PC-3 (cell line): ENCODE measurements at regions of chr22 and their contacts with region 1.

Region 1: DNA sequence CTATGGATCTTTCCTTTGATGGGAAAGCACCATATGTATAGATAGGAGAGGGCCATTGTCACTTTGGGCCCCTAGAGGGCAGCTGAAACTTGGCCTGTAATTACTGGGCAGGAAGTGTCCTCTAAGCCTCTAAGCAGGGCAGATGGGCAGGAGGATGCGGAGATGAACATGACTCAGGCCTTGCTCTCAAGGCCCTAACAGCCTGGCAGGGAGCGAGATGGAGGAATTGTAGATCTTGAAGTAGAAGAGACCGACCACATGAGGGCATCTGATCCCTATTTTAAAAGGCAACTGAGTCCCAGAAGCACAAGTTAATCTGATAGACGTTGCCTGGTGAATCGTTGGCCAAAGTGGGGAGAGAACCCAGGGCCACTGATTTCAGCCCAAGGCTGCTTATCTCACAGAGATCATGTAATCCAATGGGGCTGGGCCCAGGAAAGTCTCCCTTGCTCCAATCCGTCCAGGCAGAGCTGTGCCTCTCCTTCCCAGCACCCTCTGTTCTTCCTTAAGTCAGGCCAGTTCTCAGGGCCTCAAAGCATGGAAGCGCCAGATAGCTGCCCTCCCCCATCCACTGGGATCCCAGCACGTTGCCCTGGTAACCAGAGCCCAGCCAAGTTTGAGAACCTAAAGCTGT is 2.5 kb upstream of the SEPTIN3 start:
- DNase-seq: peak; percentile 80
- ATAC-seq: peak; percentile 98
- H3K4me3 ChIP-seq: no peak overlapping the region
- H3K27ac ChIP-seq: no peak overlapping the region
- H3K4me1 ChIP-seq: no peaks in the 10 kb centered on the region
- H3K27me3 ChIP-seq: no peaks in the 10 kb centered on the region
- CTCF ChIP-seq: peak; percentile 66

Region 2: DNA sequence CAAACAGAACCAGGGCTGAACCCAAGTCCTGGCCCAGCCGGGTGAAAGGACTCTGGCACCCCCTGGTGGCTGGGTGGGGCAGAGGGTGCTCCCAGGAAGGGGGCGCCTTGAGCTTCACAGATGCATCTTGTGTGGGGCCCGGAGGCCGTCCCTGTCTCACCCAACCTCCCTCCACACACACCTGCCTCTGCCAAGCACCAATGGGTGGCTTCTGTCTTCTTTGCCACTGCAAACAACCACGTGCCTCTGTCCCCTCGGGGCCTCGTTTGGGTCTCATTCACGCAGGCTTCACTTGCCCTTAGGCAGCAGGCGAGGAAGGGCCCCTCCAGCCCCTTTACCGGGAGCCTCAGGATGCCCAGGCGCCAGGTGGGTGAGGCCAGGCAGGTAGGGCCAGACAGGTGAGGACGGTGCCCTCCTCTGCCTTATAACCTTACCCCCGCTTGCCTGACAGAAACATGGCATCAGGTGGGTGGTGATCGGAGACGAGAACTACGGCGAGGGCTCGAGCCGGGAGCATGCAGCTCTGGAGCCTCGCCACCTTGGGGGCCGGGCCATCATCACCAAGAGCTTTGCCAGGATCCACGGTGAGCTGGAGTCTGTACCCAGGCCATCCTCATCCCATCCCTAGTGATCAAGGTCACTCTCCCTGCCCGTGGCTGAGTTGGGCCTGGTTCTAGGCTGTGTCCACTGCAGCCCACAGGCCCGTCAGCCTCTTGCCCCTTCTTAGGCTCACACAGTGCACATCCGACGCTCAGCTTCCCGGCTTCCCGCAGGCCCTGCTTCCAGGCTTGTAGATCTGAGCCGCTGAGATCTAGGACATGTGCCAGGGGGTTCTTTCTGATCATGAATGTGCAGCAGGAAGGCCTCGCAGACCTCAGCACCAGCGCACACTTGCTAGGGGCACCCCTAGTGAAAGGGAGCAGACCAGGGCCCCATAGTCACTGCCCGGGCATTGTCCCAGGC is 439.6 kb before region 1 on chr22:
- CTCF ChIA-PET with region 1: no interaction called
- POLR2A ChIA-PET with region 1: no interaction called
- intact Hi-C with region 1: no loop called
- DNase-seq: peak; percentile 33
- ATAC-seq: peak; percentile 54
- H3K4me3 ChIP-seq: no peak overlapping the region
- H3K27ac ChIP-seq: no peak overlapping the region
- H3K4me1 ChIP-seq: no peaks in the 10 kb centered on the region
- H3K27me3 ChIP-seq: no peaks in the 10 kb centered on the region
- CTCF ChIP-seq: peak; percentile 85

Region 3: DNA sequence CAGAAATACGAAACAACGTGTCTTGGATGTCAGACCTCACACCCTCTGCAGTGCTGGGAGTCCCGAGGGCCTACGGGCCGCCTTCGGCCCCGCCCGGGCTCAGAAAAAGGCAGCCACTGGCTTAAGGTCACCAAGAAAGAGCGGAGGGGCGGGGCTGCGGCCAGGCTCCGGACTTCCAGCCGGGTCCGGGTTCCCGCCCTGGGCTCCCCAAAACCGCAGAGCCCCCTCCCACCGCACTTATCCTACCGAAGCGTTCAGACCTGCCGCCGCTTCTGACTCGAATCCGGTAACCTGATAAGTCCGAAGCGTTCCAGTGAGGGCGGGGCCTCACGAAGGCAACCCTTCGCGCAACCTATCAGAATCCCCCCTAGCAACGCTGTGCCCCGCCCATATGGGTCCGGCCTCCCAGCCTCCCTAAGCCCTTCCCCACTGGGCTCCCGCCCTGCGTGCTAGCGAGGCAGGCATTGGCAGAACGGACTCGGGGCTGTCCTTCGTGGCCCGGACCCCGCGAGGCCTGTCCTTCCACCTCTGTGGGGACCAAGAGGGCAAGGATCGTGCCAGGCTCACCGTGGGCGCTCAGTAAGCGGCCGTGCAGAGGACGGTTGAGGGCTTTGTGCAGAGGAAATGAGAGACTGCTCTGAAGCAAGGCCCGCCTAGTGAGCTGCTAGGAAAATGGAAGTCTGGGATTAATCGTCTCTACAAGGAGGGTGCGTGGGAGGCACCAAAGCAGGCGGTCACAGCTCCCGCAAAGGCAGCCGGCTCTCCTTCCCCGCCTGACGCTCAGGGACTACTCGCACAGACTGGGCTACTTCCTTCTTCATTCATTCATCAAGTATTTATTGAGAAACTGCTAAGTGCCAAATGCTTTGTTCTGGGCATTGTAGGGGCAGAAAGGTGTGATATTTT is 104.0 kb after region 1 on chr22 and contains the start of gene NAGA:
- CTCF ChIA-PET with region 1: no interaction called
- POLR2A ChIA-PET with region 1: no interaction called
- intact Hi-C with region 1: loop called (anchors 2 kb)
- DNase-seq: peak; percentile 94
- ATAC-seq: peak; percentile 98
- H3K4me3 ChIP-seq: peak within 1 kb of the TSS; percentile 77
- H3K27ac ChIP-seq: peak within 1 kb of the TSS; percentile 19
- H3K4me1 ChIP-seq: peaks cover 14% of the 10 kb centered on the region
- H3K27me3 ChIP-seq: no peaks in the 10 kb centered on the region
- CTCF ChIP-seq: no peak
- total RNA-seq, gene NAGA: 25.1 and 27.2 TPM in 2 replicates

Region 4: GRCh38 chr22:42090596-42091454 is 124.1 kb after region 1 on chr22 and contains the start of gene NDUFA6:
- CTCF ChIA-PET with region 1: no interaction called
- POLR2A ChIA-PET with region 1: no interaction called
- intact Hi-C with region 1: loop called (anchors 2 kb)
- DNase-seq: peak; percentile 98
- ATAC-seq: peak; percentile 94
- H3K4me3 ChIP-seq: peak within 1 kb of the TSS; percentile 80
- H3K27ac ChIP-seq: peak within 1 kb of the TSS; percentile 86
- H3K4me1 ChIP-seq: peaks cover 9% of the 10 kb centered on the region; the same call in 1 of the 2 replicates
- H3K27me3 ChIP-seq: no peaks in the 10 kb centered on the region
- CTCF ChIP-seq: peak; percentile 79
- total RNA-seq, gene NDUFA6: 91.5 and 118 TPM in 2 replicates

Region 5: GRCh38 chr22:42111798-42112197 is 145.1 kb after region 1 on chr22:
- CTCF ChIA-PET with region 1: no interaction called
- POLR2A ChIA-PET with region 1: no interaction called
- intact Hi-C with region 1: loop called (anchors 1 kb)
- DNase-seq: no peak
- ATAC-seq: no peak
- H3K4me3 ChIP-seq: no peak overlapping the region
- H3K27ac ChIP-seq: no peak overlapping the region
- H3K4me1 ChIP-seq: no peaks in the 10 kb centered on the region
- H3K27me3 ChIP-seq: no peaks in the 10 kb centered on the region
- CTCF ChIP-seq: no peak

Region 6: GRCh38 chr22:42444077-42444904 is 477.6 kb after region 1 on chr22:
- CTCF ChIA-PET with region 1: no interaction called
- POLR2A ChIA-PET with region 1: no interaction called
- intact Hi-C with region 1: loop called (anchors 2 kb)
- DNase-seq: peak; percentile 78
- ATAC-seq: peak; percentile 68
- H3K4me3 ChIP-seq: peak overlapping the region; percentile 62
- H3K27ac ChIP-seq: no peak overlapping the region; the same call in 1 of the 2 replicates
- H3K4me1 ChIP-seq: peaks cover 20% of the 10 kb centered on the region
- H3K27me3 ChIP-seq: no peaks in the 10 kb centered on the region
- CTCF ChIP-seq: peak; percentile 73